PC-9 (cell line): ENCODE measurements at regions of chr12 and their contacts with region 1.

Region 1: DNA sequence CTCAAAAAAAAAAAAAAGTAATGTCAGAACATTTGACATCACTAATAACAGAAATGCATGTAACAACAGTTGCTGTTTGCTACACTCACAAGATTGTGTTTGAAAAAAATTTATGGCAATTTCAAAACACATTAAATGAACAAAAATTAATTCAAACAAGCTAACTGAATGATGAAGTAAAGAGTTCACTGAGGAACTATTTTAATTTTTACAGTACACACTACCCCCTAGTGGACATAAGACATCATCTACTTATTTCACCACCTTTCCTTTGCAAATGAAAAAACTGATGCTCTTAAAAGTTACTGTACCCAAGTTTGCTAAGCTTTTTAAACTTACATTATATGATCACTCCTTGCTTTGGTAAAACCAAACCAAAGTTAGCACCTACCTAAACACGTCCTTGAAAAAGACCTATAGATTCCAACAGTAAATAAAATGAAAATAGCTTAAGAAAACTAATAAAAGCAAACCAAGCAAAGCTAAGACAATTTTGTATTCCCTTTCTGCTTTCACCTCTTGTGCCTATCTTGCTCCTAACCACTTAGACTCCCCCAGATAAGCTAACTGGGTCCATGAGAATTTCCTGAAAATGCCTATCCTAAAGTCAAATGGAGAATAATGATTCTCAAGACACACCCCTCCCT is 22.2 kb downstream of the UBE2N start:
- DNase-seq: peak in 1 of 2 experiments; percentile 46
- H3K4me3 ChIP-seq: no peak overlapping the region
- H3K27ac ChIP-seq: no peak overlapping the region
- H3K4me1 ChIP-seq: no peaks in the 10 kb centered on the region
- H3K27me3 ChIP-seq: no peaks in the 10 kb centered on the region
- CTCF ChIP-seq: peak; percentile 79

Region 2: DNA sequence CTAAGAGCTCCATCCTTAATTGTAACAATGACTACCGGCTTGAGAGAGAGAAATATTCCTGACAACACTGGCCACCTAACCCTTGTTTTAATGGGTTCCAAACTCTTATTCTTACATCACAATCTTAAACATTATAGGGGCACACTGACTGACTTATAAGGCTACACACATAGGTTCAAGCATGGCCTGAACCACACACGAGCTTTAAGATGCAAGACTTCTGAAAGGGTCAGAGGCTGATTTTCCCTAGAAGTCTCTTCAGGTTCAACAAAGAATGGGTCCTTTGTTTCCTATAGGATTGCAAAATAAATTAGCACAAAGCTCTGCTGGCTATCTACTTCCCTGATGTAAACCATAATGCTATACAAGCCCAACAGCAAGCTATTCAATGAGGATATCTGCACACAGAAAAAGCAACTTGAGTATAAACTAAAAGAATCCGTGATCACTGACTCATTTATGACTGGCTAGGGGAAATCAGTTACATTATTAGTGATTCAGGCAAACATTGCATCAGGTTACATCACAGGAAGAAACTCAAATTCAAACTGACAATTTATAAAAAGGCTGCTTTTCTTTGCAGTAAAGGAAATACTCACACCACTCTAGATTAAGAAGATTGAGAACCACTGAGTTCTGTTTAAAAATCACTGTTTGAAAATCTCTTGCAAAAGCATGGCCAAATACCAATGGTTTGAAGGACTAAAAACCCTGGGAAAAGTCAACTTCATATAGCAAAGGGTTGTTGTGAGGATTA is 1282.4 kb before region 1 on chr12:
- CTCF ChIA-PET with region 1: no interaction called
- POLR2A ChIA-PET with region 1: interaction called, 10 read pairs
- intact Hi-C with region 1: no loop called
- DNase-seq: peak in 1 of 2 experiments; percentile 84
- H3K4me3 ChIP-seq: peak overlapping the region; percentile 72
- H3K27ac ChIP-seq: peak overlapping the region; percentile 96
- H3K4me1 ChIP-seq: peaks cover 88% of the 10 kb centered on the region
- H3K27me3 ChIP-seq: no peaks in the 10 kb centered on the region
- CTCF ChIP-seq: no peak

Region 3: DNA sequence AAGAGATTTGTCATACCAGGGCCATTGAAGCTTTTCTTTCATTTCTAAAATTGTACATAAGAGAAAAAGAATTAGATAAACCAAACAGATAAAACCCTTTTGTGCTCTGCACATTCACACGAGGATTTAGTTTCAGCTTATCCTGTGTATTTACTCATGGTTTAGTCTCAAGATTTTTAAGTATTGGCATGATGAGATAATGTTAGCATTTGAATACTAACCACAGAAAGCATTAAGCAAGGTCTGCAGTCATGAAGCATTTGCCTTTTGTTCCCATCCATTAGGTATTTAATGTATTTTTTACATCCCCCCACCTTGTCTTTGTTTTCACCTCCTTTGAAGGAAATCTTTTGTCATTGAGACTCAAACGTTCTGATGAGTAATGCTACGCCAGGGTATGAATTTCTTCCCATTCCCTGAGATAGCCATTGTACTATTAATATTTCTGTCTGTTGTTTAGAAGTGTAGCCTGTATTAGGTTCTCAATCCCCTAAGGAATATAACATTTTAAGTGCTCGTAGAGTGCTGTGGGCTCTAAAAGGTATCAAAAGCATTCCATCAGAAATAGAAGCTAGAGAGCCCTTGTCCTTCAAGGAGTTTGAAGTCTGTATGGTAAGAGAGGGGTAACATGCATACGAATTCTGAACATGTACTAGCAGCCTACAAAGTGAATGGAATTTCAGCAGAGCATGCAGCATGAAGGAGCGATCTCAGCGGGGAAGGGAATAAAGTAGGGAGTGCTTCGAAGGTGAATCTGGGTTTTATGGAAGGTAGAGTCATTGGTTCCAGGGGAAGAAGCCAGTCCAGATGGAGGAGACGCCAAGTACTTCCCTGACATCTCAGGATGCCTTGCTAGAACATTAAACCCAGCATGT is 280.0 kb after region 1 on chr12:
- CTCF ChIA-PET with region 1: no interaction called
- POLR2A ChIA-PET with region 1: no interaction called
- intact Hi-C with region 1: no loop called
- DNase-seq: peak in 1 of 2 experiments; percentile 68
- H3K4me3 ChIP-seq: no peak overlapping the region
- H3K27ac ChIP-seq: no peak overlapping the region
- H3K4me1 ChIP-seq: peaks cover 11% of the 10 kb centered on the region; the same call in 1 of the 2 replicates
- H3K27me3 ChIP-seq: no peaks in the 10 kb centered on the region
- CTCF ChIP-seq: no peak